ENCODE measurements at regions of chr20 and their contacts with region 1.

Region 1: DNA sequence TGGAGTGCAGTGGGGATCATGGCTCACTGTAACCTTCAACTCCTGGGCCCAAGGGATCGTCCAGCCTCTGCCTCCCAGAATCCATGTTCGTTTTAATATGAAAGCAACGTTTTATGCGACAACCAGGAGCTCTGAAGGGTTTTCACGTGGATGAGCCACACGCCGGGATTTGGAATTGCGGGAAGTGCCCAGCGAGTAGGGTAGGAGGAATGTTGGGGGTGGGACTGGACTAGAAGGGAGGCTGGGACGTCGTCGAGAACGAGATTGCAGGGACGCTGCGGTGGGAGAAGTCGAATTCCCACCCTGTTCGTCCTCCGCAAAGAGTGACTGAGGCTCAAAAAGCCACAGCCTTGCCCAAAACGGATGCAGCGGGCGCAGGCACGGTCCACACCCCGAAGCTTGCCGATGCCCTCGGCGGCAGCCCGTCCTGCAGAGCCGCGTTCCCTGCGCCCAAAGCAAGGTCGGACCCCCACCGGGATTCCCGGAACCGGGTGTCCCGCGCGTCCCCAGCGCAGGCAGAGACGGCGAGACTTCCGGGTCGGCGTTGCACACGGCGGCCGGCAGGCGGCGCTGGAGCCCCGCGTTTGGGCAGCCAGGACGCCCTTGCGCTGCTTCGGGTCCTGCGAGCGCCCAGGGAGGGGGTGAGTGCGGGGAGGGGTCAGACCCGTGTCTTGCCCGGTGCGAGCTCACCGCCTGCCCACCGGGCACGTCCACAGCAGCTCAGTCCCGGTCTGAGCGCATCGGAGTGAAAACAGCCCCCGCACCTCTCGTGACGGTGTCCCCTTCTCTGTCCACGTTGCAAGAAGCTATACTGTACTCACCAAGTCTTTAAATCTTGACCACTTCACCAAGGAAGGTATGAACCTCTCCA is 87.8 kb downstream of the DHX35 start:
- DNase-seq: peak; percentile 90
- ATAC-seq: peak; percentile 94
- H3K4me3 ChIP-seq: peak overlapping the region; percentile 74
- H3K27ac ChIP-seq: peak overlapping the region; percentile 72
- H3K4me1 ChIP-seq: peaks cover 7% of the 10 kb centered on the region
- H3K27me3 ChIP-seq: peaks cover 4% of the 10 kb centered on the region
- CTCF ChIP-seq: peak; percentile 98

Region 2: GRCh38 chr20:38543014-38543906 is 506.7 kb before region 1 on chr20:
- intact Hi-C with region 1: no loop called
- DNase-seq: no peak
- ATAC-seq: peak; percentile 33
- H3K4me3 ChIP-seq: no peak overlapping the region
- H3K27ac ChIP-seq: no peak overlapping the region
- H3K4me1 ChIP-seq: no peaks in the 10 kb centered on the region
- H3K27me3 ChIP-seq: no peaks in the 10 kb centered on the region
- CTCF ChIP-seq: no peak

Region 3: GRCh38 chr20:38926142-38926933 is 123.6 kb before region 1 on chr20 and contains the start of gene FAM83D:
- intact Hi-C with region 1: loop called (anchors 5 kb)
- DNase-seq: peak; percentile 96
- ATAC-seq: peak; percentile 98
- H3K4me3 ChIP-seq: peak within 1 kb of the TSS; percentile 70
- H3K27ac ChIP-seq: no peak within 1 kb of the TSS
- H3K4me1 ChIP-seq: peaks cover 7% of the 10 kb centered on the region
- H3K27me3 ChIP-seq: peaks cover 3% of the 10 kb centered on the region
- CTCF ChIP-seq: no peak
- total RNA-seq, gene FAM83D: 2.0 TPM

Region 4: DNA sequence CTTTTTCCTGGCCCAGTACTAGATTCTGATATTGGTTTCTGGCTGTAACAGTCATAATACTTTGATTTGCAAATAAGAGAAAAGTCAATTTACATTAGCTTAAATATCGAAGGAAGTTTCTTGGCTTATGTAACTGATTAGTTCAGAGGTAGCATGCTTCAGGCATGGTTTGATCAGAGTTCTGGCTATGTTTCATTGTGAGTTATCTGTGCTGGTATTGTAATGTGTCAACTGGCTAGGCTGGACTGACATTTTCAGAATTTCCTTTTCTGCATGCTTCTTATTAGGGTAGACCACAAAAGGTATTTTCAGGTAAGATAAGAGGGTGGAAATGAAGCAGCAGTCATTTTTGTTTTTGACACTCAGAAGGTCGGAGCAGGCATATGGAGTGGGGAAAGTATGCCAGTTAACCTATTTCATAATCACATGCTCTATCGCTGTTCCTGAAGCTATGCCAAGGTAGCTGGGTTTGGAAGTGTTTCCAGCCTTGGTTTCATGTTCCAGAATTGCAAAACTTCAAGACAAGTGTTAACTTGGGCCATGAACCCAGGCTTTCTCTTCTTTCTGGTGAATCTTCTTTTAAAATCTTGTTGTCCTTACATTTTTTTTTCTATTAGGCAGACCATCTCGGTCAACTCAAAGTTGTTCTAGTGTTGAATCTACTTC is 157.1 kb after region 1 on chr20:
- intact Hi-C with region 1: no loop called
- DNase-seq: no peak
- ATAC-seq: peak; percentile 72
- H3K4me3 ChIP-seq: no peak overlapping the region
- H3K27ac ChIP-seq: no peak overlapping the region
- H3K4me1 ChIP-seq: no peaks in the 10 kb centered on the region
- H3K27me3 ChIP-seq: no peaks in the 10 kb centered on the region
- CTCF ChIP-seq: no peak

Measured in upper lobe of right lung (tissue), 1 donor.